H1 (cell line): ENCODE measurements at regions of chr9 and their contacts with region 1.

Region 1: GRCh38 chr9:101449140-101449721 is 13.7 kb upstream of the ALDOB start:
- DNase-seq: peak; percentile 44 to 92
- H3K4me3 ChIP-seq: peak overlapping the region; percentile 53 to 83 (median 67)
- H3K27ac ChIP-seq: no peak overlapping the region
- H3K4me1 ChIP-seq: no peaks in the 10 kb centered on the region; a peak in 1 of 7 replicates
- H3K27me3 ChIP-seq: no peaks in the 10 kb centered on the region
- CTCF ChIP-seq: peak; percentile 87 to 93 (median 87)
- EP300 ChIP-seq: no peak
- POLR2A ChIP-seq: 0 out of 3 replicates have a peak, but pooled peaks of 1 of the 2 experiments have one; percentile 33
- RAD21 ChIP-seq: peak; percentile 67 to 70

Region 2: DNA sequence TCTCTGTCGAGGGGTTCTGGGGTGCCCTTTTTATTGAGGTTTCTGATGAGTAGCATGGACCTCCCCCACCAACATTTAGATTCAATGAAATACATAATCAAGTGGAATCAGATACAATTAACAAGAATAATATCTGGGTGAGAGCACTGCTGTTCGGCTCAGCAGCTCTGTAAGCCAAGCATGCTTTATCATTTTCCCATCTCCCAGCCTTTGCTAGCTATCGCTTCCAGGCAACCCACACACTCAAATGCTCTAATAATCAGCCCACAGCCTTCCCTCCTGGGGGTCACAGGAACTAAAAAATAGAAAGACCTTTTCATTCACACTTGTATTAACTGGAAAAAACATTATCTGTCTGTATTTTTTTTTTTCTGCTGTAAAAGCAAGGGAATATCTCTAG is 411.8 kb before region 1 on chr9:
- CTCF ChIA-PET with region 1: no interaction called
- POLR2A ChIA-PET with region 1: no interaction called
- DNase-seq: no peak
- H3K4me3 ChIP-seq: no peak overlapping the region
- H3K27ac ChIP-seq: no peak overlapping the region
- H3K4me1 ChIP-seq: no peaks in the 10 kb centered on the region
- H3K27me3 ChIP-seq: no peaks in the 10 kb centered on the region
- CTCF ChIP-seq: no peak
- EP300 ChIP-seq: no peak
- POLR2A ChIP-seq: no peak
- RAD21 ChIP-seq: no peak

Region 3: DNA sequence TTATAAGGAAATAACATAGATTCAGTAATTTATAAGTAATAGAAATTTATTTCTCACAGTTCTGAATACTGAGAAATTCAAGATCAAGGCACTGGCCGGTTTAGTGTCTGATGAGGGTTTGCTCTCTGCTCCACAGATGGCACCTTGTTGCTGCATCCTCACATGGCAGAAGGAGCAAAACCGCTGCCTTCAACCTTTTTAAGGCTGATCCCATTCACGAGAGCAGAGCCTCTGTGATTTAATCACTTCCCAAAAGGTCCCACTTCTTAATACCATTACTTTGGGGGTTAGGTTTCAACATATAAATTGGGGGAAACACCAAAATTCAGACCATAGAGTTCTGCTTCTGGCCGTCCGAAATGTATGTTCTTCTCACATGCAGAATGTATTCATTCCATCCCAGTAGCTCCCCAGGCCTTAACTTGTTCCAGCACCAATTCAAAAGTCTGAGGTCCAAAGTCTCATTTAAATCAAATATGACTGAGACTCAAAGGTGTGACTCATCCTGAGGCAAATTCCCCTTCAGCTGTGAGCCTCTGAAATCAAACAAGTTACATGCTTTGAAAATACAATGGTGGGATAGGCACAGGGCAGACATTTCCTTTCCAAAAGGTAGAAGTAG is 95.0 kb before region 1 on chr9:
- CTCF ChIA-PET with region 1: no interaction called
- POLR2A ChIA-PET with region 1: no interaction called
- DNase-seq: no peak
- H3K4me3 ChIP-seq: no peak overlapping the region
- H3K27ac ChIP-seq: no peak overlapping the region
- H3K4me1 ChIP-seq: no peaks in the 10 kb centered on the region
- H3K27me3 ChIP-seq: no peaks in the 10 kb centered on the region
- CTCF ChIP-seq: no peak
- EP300 ChIP-seq: no peak
- POLR2A ChIP-seq: no peak
- RAD21 ChIP-seq: no peak

Region 4: GRCh38 chr9:101477736-101478135 is 28.5 kb after region 1 on chr9:
- CTCF ChIA-PET with region 1: interaction called, 122 read pairs
- POLR2A ChIA-PET with region 1: no interaction called
- DNase-seq: no peak
- H3K4me3 ChIP-seq: no peak overlapping the region
- H3K27ac ChIP-seq: no peak overlapping the region
- H3K4me1 ChIP-seq: peaks cover 0 to 4% (median 1%) of the 10 kb centered on the region in 4 experiments; a peak in 2 of 7 replicates
- H3K27me3 ChIP-seq: no peaks in the 10 kb centered on the region
- CTCF ChIP-seq: no peak
- EP300 ChIP-seq: no peak
- POLR2A ChIP-seq: no peak
- RAD21 ChIP-seq: no peak

Region 5: DNA sequence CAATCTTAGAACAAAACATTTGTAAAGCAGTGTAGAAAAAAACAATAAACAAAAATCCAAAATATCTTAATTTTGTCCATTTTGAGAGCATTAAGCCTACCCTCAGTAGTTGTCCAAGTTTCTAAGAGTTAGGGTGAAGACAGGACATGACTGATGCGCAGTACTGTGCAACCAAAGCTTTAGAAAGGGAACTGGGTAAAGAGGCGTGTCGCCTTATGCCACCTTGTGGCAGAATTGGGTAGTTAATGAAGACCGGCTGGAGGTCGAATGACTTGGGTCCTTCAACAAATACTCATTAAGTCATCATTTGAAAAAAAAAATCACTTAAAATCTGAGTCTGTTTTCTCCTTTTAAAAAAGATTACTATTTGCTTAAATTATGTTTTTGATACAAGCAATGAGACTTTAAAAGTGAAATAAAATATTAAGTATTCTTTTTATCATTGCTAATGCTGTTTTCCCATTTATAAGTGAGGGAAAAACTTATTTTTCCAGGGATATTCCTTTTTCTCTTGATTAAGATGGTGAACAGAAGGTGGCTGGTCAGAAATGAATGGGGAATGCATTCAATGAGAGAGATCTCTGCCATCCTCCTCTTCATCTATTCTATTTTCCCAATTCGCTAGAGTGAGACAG is 81.0 kb after region 1 on chr9:
- CTCF ChIA-PET with region 1: interaction called, 25 read pairs
- POLR2A ChIA-PET with region 1: interaction called, 3 read pairs
- DNase-seq: peak in 1 of 2 experiments; percentile 69
- H3K4me3 ChIP-seq: no peak overlapping the region
- H3K27ac ChIP-seq: no peak overlapping the region
- H3K4me1 ChIP-seq: no peaks in the 10 kb centered on the region
- H3K27me3 ChIP-seq: no peaks in the 10 kb centered on the region
- CTCF ChIP-seq: peak; percentile 47 to 87 (median 74)
- EP300 ChIP-seq: no peak
- POLR2A ChIP-seq: no peak
- RAD21 ChIP-seq: peak; percentile 82 to 85

Region 6: GRCh38 chr9:101543098-101543735 is 94.0 kb after region 1 on chr9:
- CTCF ChIA-PET with region 1: interaction called, 11 read pairs
- POLR2A ChIA-PET with region 1: no interaction called
- DNase-seq: no peak
- H3K4me3 ChIP-seq: no peak overlapping the region
- H3K27ac ChIP-seq: no peak overlapping the region
- H3K4me1 ChIP-seq: no peaks in the 10 kb centered on the region
- H3K27me3 ChIP-seq: no peaks in the 10 kb centered on the region
- CTCF ChIP-seq: no peak
- EP300 ChIP-seq: no peak
- POLR2A ChIP-seq: no peak
- RAD21 ChIP-seq: no peak

Region 7: GRCh38 chr9:101832486-101832885 is 383.3 kb after region 1 on chr9:
- CTCF ChIA-PET with region 1: no interaction called
- POLR2A ChIA-PET with region 1: no interaction called
- DNase-seq: no peak
- H3K4me3 ChIP-seq: no peak overlapping the region
- H3K27ac ChIP-seq: no peak overlapping the region
- H3K4me1 ChIP-seq: no peaks in the 10 kb centered on the region
- H3K27me3 ChIP-seq: no peaks in the 10 kb centered on the region
- CTCF ChIP-seq: no peak
- EP300 ChIP-seq: no peak
- POLR2A ChIP-seq: no peak
- RAD21 ChIP-seq: no peak